ENCODE measurements at regions of chr9 and their contacts with region 1.

Region 1: DNA sequence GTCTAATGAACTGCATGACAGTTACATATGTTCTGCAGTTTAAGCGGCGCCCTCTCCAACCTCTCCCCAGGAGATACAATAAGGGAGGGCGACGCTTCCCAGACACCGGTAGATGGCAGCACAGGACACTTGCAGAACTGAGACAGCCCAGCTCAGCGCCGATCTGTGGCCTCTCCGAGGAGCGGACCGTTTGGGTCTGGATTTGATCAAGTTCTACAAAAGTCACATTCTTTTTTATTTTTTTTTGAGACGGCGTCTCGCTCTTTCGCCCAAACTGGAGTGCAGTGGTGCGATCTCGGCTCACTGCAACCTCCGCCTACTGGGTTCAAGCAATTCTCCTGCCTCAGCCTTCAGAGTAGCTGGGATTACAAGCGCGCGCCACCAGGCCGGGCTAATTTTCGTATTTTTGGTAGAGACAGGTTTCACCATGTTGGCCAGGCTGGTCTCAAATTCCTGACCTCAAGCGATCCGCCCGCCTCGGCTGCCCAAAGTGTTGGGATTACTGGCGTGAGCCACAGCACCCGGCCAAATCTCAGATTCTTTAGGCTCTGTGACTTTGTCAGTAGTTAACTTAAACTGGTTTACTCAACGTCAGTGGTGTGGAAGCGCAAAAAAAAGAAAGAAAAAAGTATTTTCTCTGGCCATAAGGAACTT is 1.4 kb upstream of the ATOSB start:
- DNase-seq: peak; percentile 94
- H3K4me3 Mint-ChIP-seq: peak overlapping the region; percentile 88
- H3K27ac Mint-ChIP-seq: no peak overlapping the region
- H3K4me1 Mint-ChIP-seq: peaks cover 31% of the 10 kb centered on the region
- H3K27me3 Mint-ChIP-seq: no peaks in the 10 kb centered on the region
- CTCF ChIP-seq: peak; percentile 95

Region 2: GRCh38 chr9:35071814-35072460 is 45.1 kb before region 1 on chr9:
- CTCF ChIA-PET with region 1: no interaction called
- POLR2A ChIA-PET with region 1: interaction called, 20 read pairs
- intact Hi-C with region 1: no loop called
- DNase-seq: peak; percentile 84
- H3K4me3 Mint-ChIP-seq: peak overlapping the region; percentile 92
- H3K27ac Mint-ChIP-seq: peak overlapping the region; percentile 92
- H3K4me1 Mint-ChIP-seq: peaks cover 22% of the 10 kb centered on the region
- H3K27me3 Mint-ChIP-seq: no peaks in the 10 kb centered on the region
- CTCF ChIP-seq: no peak

Region 3: GRCh38 chr9:35161713-35162604 is 44.9 kb after region 1 on chr9 and contains the start of gene UNC13B:
- CTCF ChIA-PET with region 1: no interaction called
- POLR2A ChIA-PET with region 1: interaction called, 54 read pairs
- intact Hi-C with region 1: loop called (anchors 2 kb)
- DNase-seq: peak; percentile 94
- H3K4me3 Mint-ChIP-seq: peak within 1 kb of the TSS; percentile 91
- H3K27ac Mint-ChIP-seq: peak within 1 kb of the TSS; percentile 94
- H3K4me1 Mint-ChIP-seq: peaks cover 18% of the 10 kb centered on the region
- H3K27me3 Mint-ChIP-seq: no peaks in the 10 kb centered on the region
- CTCF ChIP-seq: no peak
- total RNA-seq, gene UNC13B: 20.6 and 22.9 TPM in 2 replicates

Region 4: GRCh38 chr9:35179347-35180287 is 62.6 kb after region 1 on chr9:
- CTCF ChIA-PET with region 1: no interaction called
- POLR2A ChIA-PET with region 1: no interaction called
- intact Hi-C with region 1: no loop called
- DNase-seq: peak; percentile 7
- H3K4me3 Mint-ChIP-seq: no peak overlapping the region
- H3K27ac Mint-ChIP-seq: no peak overlapping the region
- H3K4me1 Mint-ChIP-seq: no peaks in the 10 kb centered on the region
- H3K27me3 Mint-ChIP-seq: no peaks in the 10 kb centered on the region
- CTCF ChIP-seq: no peak

Region 5: DNA sequence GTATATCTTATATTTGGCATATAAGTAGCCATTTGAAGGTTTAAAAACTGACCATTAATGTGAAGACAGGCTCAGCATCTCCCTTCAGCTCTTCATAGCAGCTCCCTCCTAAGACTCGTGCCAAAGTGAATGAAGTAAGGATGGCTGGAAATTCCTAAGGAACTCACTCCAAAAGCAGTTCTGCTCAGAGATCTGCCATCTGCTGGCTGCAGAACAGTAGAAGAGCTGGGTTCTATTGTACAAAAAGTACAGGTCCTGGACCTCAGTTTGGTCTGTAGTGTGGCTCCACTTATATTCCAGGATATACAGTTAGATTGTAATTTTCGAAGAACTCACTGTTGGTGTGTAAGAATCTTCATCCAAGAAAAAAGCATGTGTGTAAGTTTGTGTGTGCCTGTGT is 268.0 kb after region 1 on chr9:
- CTCF ChIA-PET with region 1: interaction called, 3 read pairs
- POLR2A ChIA-PET with region 1: no interaction called
- intact Hi-C with region 1: loop called (anchors 1 kb)
- DNase-seq: peak; percentile 18
- H3K4me3 Mint-ChIP-seq: no peak overlapping the region
- H3K27ac Mint-ChIP-seq: no peak overlapping the region
- H3K4me1 Mint-ChIP-seq: no peaks in the 10 kb centered on the region
- H3K27me3 Mint-ChIP-seq: no peaks in the 10 kb centered on the region
- CTCF ChIP-seq: no peak

Region 6: DNA sequence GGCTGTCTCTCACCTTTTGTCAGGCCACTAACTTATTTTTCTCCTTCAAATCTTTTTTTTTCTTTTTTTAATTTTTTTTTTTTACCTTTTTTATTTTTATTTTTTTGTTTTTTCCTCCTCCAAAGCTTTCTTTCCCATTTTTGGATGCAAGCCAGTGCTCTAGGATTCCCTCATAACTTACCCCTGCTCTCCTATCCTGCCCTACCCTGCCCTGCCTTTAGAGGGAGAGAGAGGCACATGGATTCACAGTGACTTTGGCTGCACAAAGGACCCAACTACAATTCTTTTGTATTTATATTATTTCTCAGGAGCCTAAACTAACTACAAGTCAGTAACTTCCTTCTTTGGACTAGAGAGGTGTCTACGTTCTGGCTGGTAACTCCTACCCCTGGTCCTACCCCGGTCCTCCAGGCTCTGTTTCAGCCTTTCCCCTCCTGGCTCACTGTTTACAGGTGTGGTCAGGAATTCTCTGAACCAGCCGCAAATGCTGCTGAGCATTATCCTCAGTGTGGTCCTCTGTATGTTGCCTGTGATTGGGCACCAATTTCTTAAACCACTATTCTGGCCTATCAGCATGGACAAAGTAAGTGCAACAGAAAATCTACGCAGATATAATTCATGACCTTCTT is 364.4 kb after region 1 on chr9:
- CTCF ChIA-PET with region 1: interaction called, 36 read pairs
- POLR2A ChIA-PET with region 1: interaction called, 6 read pairs
- intact Hi-C with region 1: loop called (anchors 1 kb)
- DNase-seq: peak; percentile 85
- H3K4me3 Mint-ChIP-seq: no peak overlapping the region
- H3K27ac Mint-ChIP-seq: no peak overlapping the region
- H3K4me1 Mint-ChIP-seq: peaks cover 10% of the 10 kb centered on the region
- H3K27me3 Mint-ChIP-seq: no peaks in the 10 kb centered on the region
- CTCF ChIP-seq: peak; percentile 84

Region 7: DNA sequence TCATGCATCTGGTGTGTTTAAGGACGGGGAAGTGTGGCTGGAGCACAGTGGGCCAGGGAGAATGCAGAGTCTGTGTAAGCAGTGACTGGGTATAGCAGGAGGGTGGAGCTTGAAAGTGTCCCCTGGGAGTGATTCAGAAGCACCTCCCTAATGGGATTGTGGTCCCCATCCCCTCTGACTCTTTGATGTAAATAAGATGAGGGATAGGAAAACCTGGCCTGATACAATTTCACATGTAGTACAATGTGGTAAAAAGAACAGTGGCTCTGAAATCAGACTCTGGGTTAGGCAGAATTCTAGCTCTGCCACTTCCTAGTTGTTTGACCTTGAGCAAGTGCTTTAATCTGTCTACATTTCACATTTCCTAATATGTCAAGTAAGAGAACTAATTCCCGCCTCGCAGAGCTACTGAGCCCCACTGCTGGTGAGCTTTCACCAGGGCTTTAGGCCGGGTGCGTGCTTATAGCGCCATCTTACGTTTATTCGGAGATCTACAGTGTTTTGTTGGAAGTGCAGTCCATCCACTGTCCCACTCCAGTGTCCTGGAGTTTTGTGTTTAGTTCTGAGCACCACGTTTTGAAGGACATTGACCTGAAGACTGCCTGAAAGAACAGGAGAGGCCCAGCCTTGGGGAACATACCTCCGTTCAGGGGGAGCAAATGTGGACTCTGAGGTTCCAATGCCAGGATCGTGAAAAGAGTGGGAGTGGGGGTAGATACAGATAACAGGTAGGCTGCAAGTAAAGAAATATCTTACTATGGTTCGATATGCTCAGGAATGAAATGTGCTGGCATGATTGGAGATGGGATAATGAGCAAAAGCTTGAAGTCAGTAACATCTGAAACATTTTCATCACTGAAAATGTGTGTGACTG is 436.9 kb after region 1 on chr9:
- CTCF ChIA-PET with region 1: interaction called, 4 read pairs
- POLR2A ChIA-PET with region 1: interaction called, 4 read pairs
- intact Hi-C with region 1: loop called (anchors 1 kb)
- DNase-seq: peak; percentile 78
- H3K4me3 Mint-ChIP-seq: no peak overlapping the region
- H3K27ac Mint-ChIP-seq: no peak overlapping the region
- H3K4me1 Mint-ChIP-seq: peaks cover 12% of the 10 kb centered on the region
- H3K27me3 Mint-ChIP-seq: no peaks in the 10 kb centered on the region
- CTCF ChIP-seq: peak; percentile 90

Measured in MCF 10A (cell line).